ENCODE measurements at regions of chr2 and their contacts with region 1.

Region 1: GRCh38 chr2:175690113-175690837 is 311.8 kb downstream of the LNPK start:
- DNase-seq: peak; percentile 47
- ATAC-seq: peak; percentile 47
- H3K4me3 Mint-ChIP-seq: no peak overlapping the region
- H3K27ac Mint-ChIP-seq: no peak overlapping the region
- H3K4me1 Mint-ChIP-seq: no peaks in the 10 kb centered on the region
- H3K27me3 Mint-ChIP-seq: peaks cover 25% of the 10 kb centered on the region
- CTCF ChIP-seq: peak; percentile 75

Region 2: DNA sequence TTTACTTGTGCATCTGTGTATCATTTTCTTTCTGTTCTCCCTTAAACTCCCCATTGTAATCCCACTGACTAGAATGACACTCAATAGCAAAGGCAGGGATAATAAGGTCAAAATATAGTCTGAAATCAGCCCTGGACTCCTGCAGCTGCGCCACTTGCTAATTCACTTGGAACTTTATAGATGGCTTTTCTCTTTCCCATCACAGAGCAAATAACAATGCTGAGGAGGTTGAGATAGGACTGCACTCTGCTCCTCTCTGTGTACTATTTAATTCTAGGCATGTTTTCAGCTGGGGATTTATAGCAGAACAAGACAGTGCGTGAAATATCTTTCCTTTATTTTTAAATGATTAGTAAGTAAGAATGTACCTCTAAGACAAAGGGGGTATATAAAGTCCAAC is 12.4 kb before region 1 on chr2:
- CTCF ChIA-PET with region 1: interaction called, 16 read pairs
- POLR2A ChIA-PET with region 1: no interaction called
- intact Hi-C with region 1: no loop called
- DNase-seq: no peak
- ATAC-seq: no peak
- H3K4me3 Mint-ChIP-seq: no peak overlapping the region
- H3K27ac Mint-ChIP-seq: no peak overlapping the region
- H3K4me1 Mint-ChIP-seq: no peaks in the 10 kb centered on the region
- H3K27me3 Mint-ChIP-seq: peaks cover 11% of the 10 kb centered on the region
- CTCF ChIP-seq: no peak

Region 3: GRCh38 chr2:176088048-176088936 is 398.0 kb after region 1 on chr2:
- CTCF ChIA-PET with region 1: interaction called, 13 read pairs
- POLR2A ChIA-PET with region 1: no interaction called
- intact Hi-C with region 1: no loop called
- DNase-seq: no peak
- ATAC-seq: peak; percentile 30
- H3K4me3 Mint-ChIP-seq: peak overlapping the region; percentile 20
- H3K27ac Mint-ChIP-seq: no peak overlapping the region
- H3K4me1 Mint-ChIP-seq: peaks cover 7% of the 10 kb centered on the region
- H3K27me3 Mint-ChIP-seq: peaks cover 85% of the 10 kb centered on the region
- CTCF ChIP-seq: no peak

Region 4: GRCh38 chr2:176096986-176097819 is 406.9 kb after region 1 on chr2:
- CTCF ChIA-PET with region 1: interaction called, 94 read pairs
- POLR2A ChIA-PET with region 1: no interaction called
- intact Hi-C with region 1: loop called (anchors 1 kb)
- DNase-seq: peak; percentile 74
- ATAC-seq: peak; percentile 84
- H3K4me3 Mint-ChIP-seq: peak overlapping the region; percentile 35
- H3K27ac Mint-ChIP-seq: no peak overlapping the region
- H3K4me1 Mint-ChIP-seq: peaks cover 14% of the 10 kb centered on the region
- H3K27me3 Mint-ChIP-seq: peaks cover 82% of the 10 kb centered on the region
- CTCF ChIP-seq: peak; percentile 85